Activated T-helper 1 cell treated with anti-CD3 and anti-CD28 coated beads, Interleukin-12 subunit alpha, Interleukin-12 subunit beta, Interleukin-2, Interleukin-4 antibody, amounts not matched to agents 30 ng/mL and 10 ng/mL and 1 ng/mL, durations not matched to agents 14 hours and 24 hours and 36 hours (primary cell): ENCODE measurements at regions of chr20 and their contacts with region 1.

Region 1: GRCh38 chr20:38472513-38473372 is at the start of gene RALGAPB:
- DNase-seq: peak; percentile 97
- H3K4me3 Mint-ChIP-seq: peak within 1 kb of the TSS; percentile 88
- H3K27ac Mint-ChIP-seq: peak within 1 kb of the TSS; percentile 77
- H3K4me1 Mint-ChIP-seq: peaks cover 34% of the 10 kb centered on the region
- H3K27me3 Mint-ChIP-seq: peaks cover 2% of the 10 kb centered on the region
- total RNA-seq, gene RALGAPB: 31.0 and 32.4 TPM in 2 replicates

Region 2: GRCh38 chr20:38446441-38447209 is 26.1 kb before region 1 on chr20:
- intact Hi-C with region 1: loop called (anchors 1 kb)
- DNase-seq: peak; percentile 88
- H3K4me3 Mint-ChIP-seq: peak overlapping the region; percentile 84
- H3K27ac Mint-ChIP-seq: peak overlapping the region; percentile 80
- H3K4me1 Mint-ChIP-seq: peaks cover 38% of the 10 kb centered on the region
- H3K27me3 Mint-ChIP-seq: peaks cover 8% of the 10 kb centered on the region